Mammary epithelial cell (primary cell): ENCODE measurements at regions of chr15 and their contacts with region 1.

Region 1: GRCh38 chr15:81939604-81940440 is 106.0 kb downstream of the MEX3B start:
- DNase-seq: peak; percentile 53
- H3K4me3 ChIP-seq: no peak overlapping the region
- H3K27ac ChIP-seq: no peak overlapping the region
- H3K4me1 ChIP-seq: no peaks in the 10 kb centered on the region
- H3K27me3 ChIP-seq: no peaks in the 10 kb centered on the region
- CTCF ChIP-seq: peak; percentile 72 to 84

Region 2: GRCh38 chr15:81410318-81410753 is 529.5 kb before region 1 on chr15:
- CTCF ChIA-PET with region 1: no interaction called
- dilution Hi-C with region 1: no loop called
- in situ Hi-C with region 1: loop called in 1 of 2 experiments (anchors 25 kb)
- intact Hi-C with region 1: loop called (anchors 1 kb)
- DNase-seq: peak; percentile 68
- H3K4me3 ChIP-seq: no peak overlapping the region
- H3K27ac ChIP-seq: no peak overlapping the region
- H3K4me1 ChIP-seq: no peaks in the 10 kb centered on the region
- H3K27me3 ChIP-seq: no peaks in the 10 kb centered on the region
- CTCF ChIP-seq: peak; percentile 43 to 58

Region 3: GRCh38 chr15:81480645-81481053 is 459.2 kb before region 1 on chr15:
- CTCF ChIA-PET with region 1: no interaction called
- dilution Hi-C with region 1: no loop called
- in situ Hi-C with region 1: loop called in 1 of 2 experiments (anchors 10 kb)
- intact Hi-C with region 1: loop called (anchors 1 kb)
- DNase-seq: peak; percentile 27
- H3K4me3 ChIP-seq: no peak overlapping the region
- H3K27ac ChIP-seq: no peak overlapping the region
- H3K4me1 ChIP-seq: no peaks in the 10 kb centered on the region
- H3K27me3 ChIP-seq: no peaks in the 10 kb centered on the region
- CTCF ChIP-seq: peak; percentile 63 to 78

Region 4: DNA sequence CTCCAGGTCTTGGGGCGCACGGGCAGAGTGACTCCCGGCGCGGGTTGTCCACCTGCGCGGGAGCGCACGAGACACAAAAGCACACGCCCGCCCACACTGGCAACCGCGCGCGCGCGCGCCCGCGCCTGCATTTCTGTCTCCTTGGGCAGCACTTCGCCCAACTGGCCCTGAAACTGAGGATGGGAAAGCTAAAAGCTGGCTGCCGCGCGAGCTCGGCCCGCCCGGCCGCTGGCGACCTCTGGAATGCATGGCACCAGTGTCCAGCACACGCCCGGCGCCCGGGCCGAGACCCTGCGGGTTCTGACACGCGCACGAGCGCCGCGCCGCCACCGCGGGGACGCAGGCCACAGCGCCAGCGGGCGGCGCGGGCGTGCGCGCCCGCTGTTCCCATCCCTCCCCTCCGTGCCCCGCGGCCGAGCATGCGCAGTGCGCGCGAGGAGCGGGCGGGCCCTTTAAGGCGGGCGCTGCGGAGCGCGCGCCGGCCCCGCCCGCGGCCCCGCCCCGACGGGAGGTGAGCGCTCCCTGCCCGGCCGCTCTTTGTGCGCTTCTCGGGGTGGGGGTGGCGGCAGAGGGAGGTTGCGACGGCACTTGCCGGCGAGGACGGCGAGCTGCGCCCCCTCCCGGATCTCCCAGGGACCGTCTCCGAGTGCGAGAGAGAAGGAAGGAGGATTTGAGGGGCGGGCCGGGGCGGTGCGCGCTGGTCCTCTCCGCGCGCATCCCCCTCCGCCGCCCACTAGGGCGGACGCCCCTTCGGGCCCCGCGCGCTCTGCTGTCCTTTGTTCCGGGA is 107.0 kb after region 1 on chr15:
- CTCF ChIA-PET with region 1: no interaction called
- dilution Hi-C with region 1: no loop called
- in situ Hi-C with region 1: no loop called
- intact Hi-C with region 1: loop called (anchors 10 kb)
- DNase-seq: peak; percentile 83
- H3K4me3 ChIP-seq: peak overlapping the region; percentile 73 to 90 (median 81)
- H3K27ac ChIP-seq: no peak overlapping the region
- H3K4me1 ChIP-seq: peaks cover 11% of the 10 kb centered on the region
- H3K27me3 ChIP-seq: no peaks in the 10 kb centered on the region
- CTCF ChIP-seq: peak; percentile 33 to 65

Region 5: DNA sequence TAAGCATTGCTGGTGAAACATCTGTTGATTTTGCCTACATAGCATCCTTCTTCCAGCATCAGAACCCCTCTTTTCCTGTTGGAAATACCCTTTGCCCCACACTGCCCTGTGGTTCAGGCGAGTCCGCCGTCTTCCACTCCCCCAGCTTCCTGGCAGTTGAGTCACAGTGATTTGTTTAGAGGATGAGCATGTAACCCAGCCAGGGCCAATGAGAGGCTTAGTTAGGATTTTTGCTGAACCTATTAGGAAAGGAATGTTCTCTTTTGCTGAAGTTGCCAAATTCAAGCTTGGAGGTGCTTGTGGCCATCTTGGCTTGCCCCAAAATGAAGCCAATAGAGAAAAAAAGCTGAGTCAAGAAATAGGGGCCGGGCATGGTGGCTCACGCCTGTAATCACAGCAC is 125.0 kb after region 1 on chr15:
- CTCF ChIA-PET with region 1: no interaction called
- dilution Hi-C with region 1: no loop called
- in situ Hi-C with region 1: no loop called
- intact Hi-C with region 1: no loop called
- DNase-seq: no peak
- H3K4me3 ChIP-seq: no peak overlapping the region
- H3K27ac ChIP-seq: no peak overlapping the region
- H3K4me1 ChIP-seq: no peaks in the 10 kb centered on the region
- H3K27me3 ChIP-seq: peaks cover 4% of the 10 kb centered on the region
- CTCF ChIP-seq: no peak

Region 6: DNA sequence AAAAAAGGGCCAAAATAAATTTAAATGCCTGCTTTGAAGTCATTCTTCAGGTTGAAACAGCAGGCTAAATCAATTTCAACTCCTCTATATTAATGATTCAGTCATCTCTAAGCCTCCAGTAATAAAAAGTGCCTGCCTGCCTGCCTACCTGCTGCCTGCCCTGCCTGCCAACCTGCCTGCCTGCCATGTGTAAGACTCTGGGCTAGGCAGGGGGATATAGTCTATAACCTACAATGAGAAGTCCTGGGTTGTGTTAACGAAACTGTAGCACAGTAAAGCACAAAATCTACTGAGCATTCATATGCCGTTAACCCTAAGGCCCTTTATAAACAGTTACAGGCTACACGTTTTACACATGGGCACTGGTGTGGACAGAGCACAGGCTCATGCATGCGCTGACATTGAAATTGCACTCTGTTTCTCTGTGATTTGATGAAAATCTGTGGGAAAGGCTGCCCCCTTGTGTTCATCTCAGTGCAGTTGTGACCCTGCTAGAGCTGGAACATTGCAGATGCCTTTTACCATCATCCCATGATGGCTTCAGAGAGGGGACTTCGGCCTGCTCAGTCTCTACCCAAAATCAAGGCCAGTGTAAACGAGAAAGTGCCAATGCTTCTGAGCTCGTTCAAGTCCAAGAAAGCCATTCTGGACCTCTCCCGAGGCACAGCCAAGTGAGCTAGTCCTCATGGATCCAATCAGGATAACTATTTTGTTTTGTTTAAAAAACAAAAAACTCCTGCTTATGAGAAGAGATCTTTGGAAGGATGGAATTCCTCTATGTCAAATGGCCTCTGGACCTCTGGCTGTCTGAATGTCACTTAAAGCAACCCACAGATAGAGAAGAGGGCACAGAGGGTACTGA is 258.1 kb after region 1 on chr15:
- CTCF ChIA-PET with region 1: no interaction called
- dilution Hi-C with region 1: no loop called
- in situ Hi-C with region 1: no loop called
- intact Hi-C with region 1: loop called (anchors 5 kb)
- DNase-seq: peak; percentile 48
- H3K4me3 ChIP-seq: no peak overlapping the region
- H3K27ac ChIP-seq: no peak overlapping the region
- H3K4me1 ChIP-seq: no peaks in the 10 kb centered on the region
- H3K27me3 ChIP-seq: no peaks in the 10 kb centered on the region
- CTCF ChIP-seq: peak; percentile 76 to 82